ENCODE measurements at regions of chr10 and their contacts with region 1.

Region 1: GRCh38 chr10:98425511-98426352 is 10.8 kb upstream of the PYROXD2 start:
- DNase-seq: no peak
- H3K4me3 ChIP-seq: no peak overlapping the region
- H3K27me3 ChIP-seq: no peaks in the 10 kb centered on the region
- CTCF ChIP-seq: peak; percentile 79

Region 2: GRCh38 chr10:98314489-98315284 is 111.0 kb before region 1 on chr10:
- CTCF ChIA-PET with region 1: interaction called, 8 read pairs
- POLR2A ChIA-PET with region 1: interaction called, 11 read pairs
- DNase-seq: peak; percentile 37
- H3K4me3 ChIP-seq: no peak overlapping the region
- H3K27me3 ChIP-seq: no peaks in the 10 kb centered on the region
- CTCF ChIP-seq: no peak

Region 3: DNA sequence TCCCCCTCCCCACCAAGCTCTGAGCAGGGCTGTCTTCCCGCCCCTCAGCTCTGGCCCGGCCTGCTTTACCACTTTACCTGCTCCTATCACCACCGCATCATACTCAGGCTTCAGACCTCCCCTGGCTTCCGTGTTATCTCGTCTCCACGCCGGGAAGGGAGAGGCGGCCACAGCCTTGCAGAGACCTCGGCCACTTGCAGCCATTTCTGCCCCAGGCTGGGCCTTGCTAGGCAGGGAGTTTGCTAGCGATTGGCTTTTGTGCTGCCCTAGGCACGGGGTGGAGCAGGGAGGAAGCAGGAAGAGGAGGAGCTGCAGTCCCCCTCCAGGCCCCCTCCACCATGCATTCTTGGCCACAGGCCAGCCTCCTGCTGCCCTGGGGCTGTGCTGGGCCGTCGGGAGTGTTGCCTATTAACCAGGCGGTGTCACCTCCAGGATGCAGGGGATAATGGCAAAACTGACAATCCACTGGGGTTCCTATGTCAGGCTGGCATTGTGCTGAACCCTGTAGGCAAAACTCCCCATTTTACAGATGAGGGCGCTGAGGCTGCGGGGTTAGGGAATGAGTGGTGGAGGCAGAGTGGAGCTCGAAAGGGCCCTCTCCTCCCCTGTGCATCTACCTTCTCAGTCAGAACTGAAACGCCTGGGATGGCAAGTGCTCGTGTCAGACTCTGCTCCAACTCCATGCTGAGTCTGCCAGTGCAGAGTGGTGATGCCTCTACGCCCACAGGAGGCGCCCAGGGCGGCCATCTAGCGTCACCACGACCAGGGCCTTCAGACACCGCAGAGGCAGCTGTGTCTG is 10.6 kb before region 1 on chr10 and contains the start of gene PYROXD2:
- CTCF ChIA-PET with region 1: interaction called, 44 read pairs
- POLR2A ChIA-PET with region 1: interaction called, 3 read pairs
- DNase-seq: peak; percentile 65
- H3K4me3 ChIP-seq: peak within 1 kb of the TSS; percentile 61
- H3K27me3 ChIP-seq: no peaks in the 10 kb centered on the region
- CTCF ChIP-seq: peak; percentile 18; the same call in 1 of the 2 replicates
- polyA plus RNA-seq, gene PYROXD2: 13.9 and 23.1 TPM in 2 replicates

Measured in BJ (cell line).